ENCODE measurements at regions of chr16 and their contacts with region 1.

Region 1: GRCh38 chr16:30698139-30698815 is 694 bp upstream of the SRCAP start:
- DNase-seq: peak; percentile 98
- H3K4me3 ChIP-seq: peak overlapping the region; percentile 92 to 100 (median 100)
- H3K27ac ChIP-seq: peak overlapping the region; percentile 97 to 100 (median 100)
- H3K4me1 ChIP-seq: peaks cover 0 to 32% (median 23%) of the 10 kb centered on the region in 4 donors
- H3K27me3 ChIP-seq: no peaks in the 10 kb centered on the region
- CTCF ChIP-seq: no peak
- EP300 ChIP-seq: peak in 1 of 4 donors; percentile 48
- POLR2A ChIP-seq: peak; percentile 0 to 69

Region 2: GRCh38 chr16:30657866-30658730 is 40.2 kb before region 1 on chr16 and contains the start of gene FBRS:
- intact Hi-C with region 1: loop called (anchors 1 kb)
- DNase-seq: peak; percentile 100
- H3K4me3 ChIP-seq: peak within 1 kb of the TSS; percentile 91 to 99 (median 97)
- H3K27ac ChIP-seq: peak within 1 kb of the TSS; percentile 96 to 98 (median 97)
- H3K4me1 ChIP-seq: peaks cover 0 to 58% (median 53%) of the 10 kb centered on the region in 4 donors
- H3K27me3 ChIP-seq: no peaks in the 10 kb centered on the region
- CTCF ChIP-seq: peak in 3 of 4 experiments; percentile 8 to 66 (median 38)
- EP300 ChIP-seq: peak in 2 of 4 donors; percentile 49 to 52
- POLR2A ChIP-seq: peak; percentile 78 to 94
- total RNA-seq, gene FBRS: 12.5 to 29.6 (median 22.7) TPM

Region 3: GRCh38 chr16:30715737-30716445 is 17.6 kb after region 1 on chr16:
- intact Hi-C with region 1: loop called (anchors 2 kb)
- DNase-seq: no peak
- H3K4me3 ChIP-seq: no peak overlapping the region
- H3K27ac ChIP-seq: peak overlapping the region in 1 of 4 donors; percentile 11
- H3K4me1 ChIP-seq: peaks cover 0 to 4% (median 0%) of the 10 kb centered on the region in 4 donors
- H3K27me3 ChIP-seq: no peaks in the 10 kb centered on the region
- CTCF ChIP-seq: no peak
- EP300 ChIP-seq: no peak
- POLR2A ChIP-seq: no peak

Region 4: DNA sequence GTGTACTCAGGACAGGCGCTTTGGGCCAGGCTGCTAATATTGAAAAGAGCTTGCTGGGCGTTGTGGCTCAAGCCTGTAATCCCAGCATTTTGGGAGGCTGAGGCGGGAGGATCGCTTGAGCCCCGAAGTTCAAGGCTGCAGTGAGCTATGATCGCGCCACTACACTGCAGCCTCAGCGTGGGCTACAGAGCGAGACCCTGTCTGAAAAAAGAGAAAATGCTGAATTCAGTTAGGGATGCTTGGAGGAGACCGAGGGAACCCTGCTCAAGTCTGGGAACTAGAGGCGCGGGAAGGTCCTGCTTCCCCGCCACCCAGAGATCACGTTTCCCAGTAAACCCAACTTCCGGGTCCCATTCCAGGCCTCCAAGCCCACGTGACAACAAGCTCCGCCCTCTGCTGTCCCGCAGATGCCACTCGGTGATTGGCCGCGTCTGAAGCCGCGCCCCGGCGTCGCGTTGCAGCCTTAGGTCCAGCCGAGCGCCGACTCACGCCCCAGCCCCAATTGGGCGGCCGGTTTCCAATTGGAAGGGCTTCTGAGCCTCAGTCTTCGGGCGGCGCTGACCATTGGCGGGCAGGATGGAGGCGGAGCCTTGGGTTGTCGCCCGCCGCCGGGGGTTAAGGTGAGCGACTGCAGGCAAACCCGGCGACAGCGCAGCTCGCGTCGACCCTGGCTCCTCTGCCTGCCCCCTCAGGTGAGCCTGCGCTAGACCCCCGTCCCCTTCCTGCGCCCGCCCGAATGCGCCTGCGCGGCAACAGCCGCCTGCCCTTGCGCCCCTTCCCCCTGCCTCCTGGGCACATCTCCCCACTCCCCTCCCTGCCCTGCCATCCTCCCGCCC is 49.7 kb after region 1 on chr16 and contains the start of gene PHKG2:
- intact Hi-C with region 1: loop called (anchors 5 kb)
- DNase-seq: peak; percentile 100
- H3K4me3 ChIP-seq: peak within 1 kb of the TSS; percentile 79 to 99 (median 93)
- H3K27ac ChIP-seq: peak within 1 kb of the TSS; percentile 78 to 92 (median 84)
- H3K4me1 ChIP-seq: peaks cover 0 to 27% (median 15%) of the 10 kb centered on the region in 4 donors
- H3K27me3 ChIP-seq: no peaks in the 10 kb centered on the region
- CTCF ChIP-seq: no peak
- EP300 ChIP-seq: no peak
- POLR2A ChIP-seq: peak; percentile 21 to 37
- total RNA-seq, gene PHKG2: 20.1 to 28.5 (median 23.7) TPM

Measured in sigmoid colon (tissue), 7 donors.